ENCODE measurements at regions of chr10 and their contacts with region 1.

Region 1: GRCh38 chr10:102479651-102480050 is 22.9 kb downstream of the ACTR1A start:
- DNase-seq: no peak
- H3K27ac ChIP-seq: peak overlapping the region; percentile 47
- CTCF ChIP-seq: no peak

Region 2: GRCh38 chr10:102394079-102394800 is 85.4 kb before region 1 on chr10:
- CTCF ChIA-PET with region 1: interaction called, 13 read pairs
- POLR2A ChIA-PET with region 1: no interaction called
- DNase-seq: peak; percentile 97
- H3K27ac ChIP-seq: peak overlapping the region; percentile 85
- CTCF ChIP-seq: peak; percentile 66

Region 3: DNA sequence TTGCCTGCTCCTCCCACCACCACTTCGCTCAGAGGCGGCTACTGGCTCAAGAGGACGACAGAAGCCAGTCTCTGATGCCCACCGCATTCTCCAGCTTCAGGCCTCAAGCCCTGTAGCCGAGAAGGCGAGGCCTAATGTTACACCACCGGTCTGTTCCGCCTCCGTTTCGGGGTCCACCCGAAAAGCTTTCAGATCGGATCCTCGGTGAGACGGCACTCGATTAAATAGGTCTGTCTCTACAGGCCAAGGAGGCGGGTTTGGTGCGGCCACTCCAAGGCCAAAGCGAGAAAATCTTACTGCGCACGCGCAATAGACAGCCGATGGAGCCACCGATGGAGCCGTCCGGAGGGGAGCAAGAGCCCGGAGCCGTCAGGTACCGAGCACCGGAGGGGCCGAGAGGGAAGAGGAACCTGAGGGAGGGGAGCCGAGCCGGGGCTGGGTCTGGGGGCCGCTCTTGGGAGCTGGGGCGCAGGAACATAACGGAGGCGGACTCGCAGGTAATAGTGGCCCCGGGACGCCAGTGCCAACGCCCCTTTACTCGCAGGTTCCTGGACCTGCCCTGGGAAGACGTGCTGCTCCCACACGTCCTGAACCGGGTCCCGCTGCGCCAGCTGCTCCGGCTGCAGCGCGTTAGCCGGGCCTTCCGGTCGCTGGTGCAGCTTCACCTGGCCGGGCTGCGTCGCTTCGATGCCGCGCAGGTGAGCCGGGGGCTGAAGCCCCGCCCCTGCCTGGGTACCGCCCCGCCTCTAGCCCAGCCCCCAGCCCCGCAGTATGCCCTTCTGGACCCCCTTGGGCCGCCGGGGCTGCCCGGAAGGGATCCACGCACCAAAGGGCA is 58.6 kb before region 1 on chr10 and contains the start of gene FBXL15:
- CTCF ChIA-PET with region 1: interaction called, 14 read pairs
- POLR2A ChIA-PET with region 1: interaction called, 3 read pairs
- DNase-seq: peak; percentile 98
- H3K27ac ChIP-seq: peak within 1 kb of the TSS; percentile 96
- CTCF ChIP-seq: no peak

Region 4: GRCh38 chr10:102461187-102462054 is 18.2 kb before region 1 on chr10:
- CTCF ChIA-PET with region 1: interaction called, 11 read pairs
- POLR2A ChIA-PET with region 1: no interaction called
- DNase-seq: peak; percentile 99
- H3K27ac ChIP-seq: peak overlapping the region; percentile 29
- CTCF ChIP-seq: no peak

Region 5: DNA sequence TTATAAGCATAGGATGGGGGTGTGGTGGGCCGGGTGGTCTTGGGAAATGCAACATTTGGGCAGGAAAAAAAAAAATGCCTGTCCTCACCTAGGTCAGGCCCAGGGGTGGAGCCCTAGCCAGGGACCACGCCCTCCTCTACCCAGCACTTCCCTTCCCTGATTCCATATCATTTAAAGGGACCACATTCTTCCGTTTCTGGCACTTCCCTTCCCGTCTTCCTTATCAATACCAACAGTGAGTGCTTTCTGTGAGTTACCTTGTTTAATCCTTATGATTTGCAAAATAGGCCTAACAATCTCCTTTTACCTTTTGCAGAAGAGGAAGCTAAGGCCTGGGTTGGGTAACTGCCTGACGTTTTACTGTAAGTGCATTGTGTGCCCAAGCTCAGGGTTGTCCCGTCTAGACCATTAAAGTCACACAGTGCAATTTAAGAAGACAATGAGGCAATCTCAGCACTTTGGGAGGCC is 11.6 kb before region 1 on chr10:
- CTCF ChIA-PET with region 1: interaction called, 11 read pairs
- POLR2A ChIA-PET with region 1: no interaction called
- DNase-seq: no peak
- H3K27ac ChIP-seq: no peak overlapping the region
- CTCF ChIP-seq: no peak

Region 6: DNA sequence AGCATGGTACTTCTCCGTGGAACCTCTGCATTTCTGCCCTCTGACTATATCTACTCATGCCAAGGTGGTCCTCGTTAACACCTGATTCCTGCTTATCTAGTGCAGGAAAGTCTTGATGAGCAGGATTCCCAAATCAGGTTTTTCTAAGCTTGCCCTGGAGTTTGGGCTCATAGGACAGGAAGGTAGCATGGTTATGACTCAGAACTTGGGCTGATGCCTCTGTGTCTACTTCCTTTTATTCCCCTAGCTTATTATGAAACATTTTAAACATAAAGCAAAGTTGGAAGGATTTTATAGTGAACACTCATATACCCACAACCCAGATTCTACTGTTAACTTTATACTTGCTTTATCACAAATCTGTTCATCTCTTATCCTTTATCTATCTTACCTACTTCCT is 29.7 kb after region 1 on chr10:
- CTCF ChIA-PET with region 1: no interaction called
- POLR2A ChIA-PET with region 1: no interaction called
- DNase-seq: peak; percentile 44
- H3K27ac ChIP-seq: 0 out of 2 replicates have a peak overlapping the region, but pooled peaks have one; percentile 37
- CTCF ChIP-seq: no peak

Region 7: GRCh38 chr10:102593074-102593803 is 113.6 kb after region 1 on chr10:
- CTCF ChIA-PET with region 1: no interaction called
- POLR2A ChIA-PET with region 1: no interaction called
- DNase-seq: no peak
- H3K27ac ChIP-seq: peak overlapping the region; percentile 20; the same call in 1 of the 2 replicates
- CTCF ChIP-seq: no peak

Region 8: GRCh38 chr10:102604379-102604960 is 124.8 kb after region 1 on chr10:
- CTCF ChIA-PET with region 1: interaction called, 4 read pairs
- POLR2A ChIA-PET with region 1: interaction called, 11 read pairs
- DNase-seq: peak; percentile 97
- H3K27ac ChIP-seq: peak overlapping the region; percentile 88
- CTCF ChIP-seq: no peak

Measured in RWPE1 (cell line).